ENCODE measurements at regions of chr3 and their contacts with region 1.

Region 1: GRCh38 chr3:45593708-45594609 is 592 bp upstream of the LIMD1 start:
- DNase-seq: peak; percentile 83
- ATAC-seq: peak; percentile 68
- H3K4me3 ChIP-seq: peak overlapping the region; percentile 89
- H3K27ac ChIP-seq: peak overlapping the region; percentile 80
- H3K4me1 ChIP-seq: peaks cover 38% of the 10 kb centered on the region
- H3K27me3 ChIP-seq: no peaks in the 10 kb centered on the region
- CTCF ChIP-seq: no peak

Region 2: DNA sequence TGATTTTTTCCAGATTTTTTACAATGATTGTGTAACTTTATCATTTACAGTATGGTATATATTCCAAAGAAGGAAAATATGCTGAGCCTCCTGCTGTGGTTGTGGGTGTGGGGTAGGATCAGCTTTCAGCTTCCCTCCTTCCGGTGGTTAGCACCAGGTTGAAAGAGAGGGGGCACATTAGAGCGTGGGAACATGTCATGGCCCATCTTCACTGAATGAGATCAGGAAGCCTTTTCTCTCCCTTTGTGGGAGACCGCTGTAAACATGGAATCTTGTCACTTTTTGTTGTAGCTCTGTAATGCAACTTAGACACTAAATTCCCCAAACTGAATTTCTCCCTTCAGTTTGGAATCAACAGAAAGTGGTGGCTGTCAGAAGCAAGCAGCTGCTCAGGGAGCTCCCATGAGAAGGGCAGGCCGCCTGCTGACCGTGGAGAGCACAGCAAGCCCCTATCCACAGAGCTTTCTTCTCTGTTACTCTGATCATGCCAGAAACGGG is 86.1 kb before region 1 on chr3:
- CTCF ChIA-PET with region 1: no interaction called
- POLR2A ChIA-PET with region 1: no interaction called
- intact Hi-C with region 1: loop called (anchors 1 kb)
- DNase-seq: no peak
- ATAC-seq: peak; percentile 19; the same call in 1 of the 2 replicates
- H3K4me3 ChIP-seq: no peak overlapping the region
- H3K27ac ChIP-seq: peak overlapping the region; percentile 86
- H3K4me1 ChIP-seq: peaks cover 23% of the 10 kb centered on the region
- H3K27me3 ChIP-seq: no peaks in the 10 kb centered on the region
- CTCF ChIP-seq: peak; percentile 26; the same call in 1 of the 2 replicates

Region 3: GRCh38 chr3:45518376-45519135 is 75.4 kb before region 1 on chr3:
- CTCF ChIA-PET with region 1: no interaction called
- POLR2A ChIA-PET with region 1: no interaction called
- intact Hi-C with region 1: no loop called
- DNase-seq: no peak
- ATAC-seq: no peak
- H3K4me3 ChIP-seq: no peak overlapping the region
- H3K27ac ChIP-seq: no peak overlapping the region
- H3K4me1 ChIP-seq: no peaks in the 10 kb centered on the region
- H3K27me3 ChIP-seq: no peaks in the 10 kb centered on the region
- CTCF ChIP-seq: no peak

Region 4: GRCh38 chr3:45546716-45547701 is 47.0 kb before region 1 on chr3:
- CTCF ChIA-PET with region 1: interaction called, 4 read pairs
- POLR2A ChIA-PET with region 1: interaction called, 4 read pairs
- intact Hi-C with region 1: loop called (anchors 2 kb)
- DNase-seq: peak; percentile 71
- ATAC-seq: peak; percentile 57
- H3K4me3 ChIP-seq: no peak overlapping the region
- H3K27ac ChIP-seq: peak overlapping the region; percentile 47
- H3K4me1 ChIP-seq: peaks cover 45% of the 10 kb centered on the region
- H3K27me3 ChIP-seq: no peaks in the 10 kb centered on the region
- CTCF ChIP-seq: peak; percentile 74

Region 5: GRCh38 chr3:45616158-45616557 is 22.2 kb after region 1 on chr3:
- CTCF ChIA-PET with region 1: no interaction called
- POLR2A ChIA-PET with region 1: no interaction called
- intact Hi-C with region 1: no loop called
- DNase-seq: no peak
- ATAC-seq: no peak
- H3K4me3 ChIP-seq: no peak overlapping the region
- H3K27ac ChIP-seq: no peak overlapping the region
- H3K4me1 ChIP-seq: peaks cover 27% of the 10 kb centered on the region
- H3K27me3 ChIP-seq: no peaks in the 10 kb centered on the region
- CTCF ChIP-seq: no peak

Region 6: GRCh38 chr3:45626096-45626887 is 32.3 kb after region 1 on chr3:
- CTCF ChIA-PET with region 1: no interaction called
- POLR2A ChIA-PET with region 1: no interaction called
- intact Hi-C with region 1: loop called (anchors 1 kb)
- DNase-seq: peak; percentile 96
- ATAC-seq: peak; percentile 79
- H3K4me3 ChIP-seq: peak overlapping the region; percentile 47
- H3K27ac ChIP-seq: peak overlapping the region; percentile 98
- H3K4me1 ChIP-seq: peaks cover 41% of the 10 kb centered on the region
- H3K27me3 ChIP-seq: no peaks in the 10 kb centered on the region
- CTCF ChIP-seq: no peak

Region 7: DNA sequence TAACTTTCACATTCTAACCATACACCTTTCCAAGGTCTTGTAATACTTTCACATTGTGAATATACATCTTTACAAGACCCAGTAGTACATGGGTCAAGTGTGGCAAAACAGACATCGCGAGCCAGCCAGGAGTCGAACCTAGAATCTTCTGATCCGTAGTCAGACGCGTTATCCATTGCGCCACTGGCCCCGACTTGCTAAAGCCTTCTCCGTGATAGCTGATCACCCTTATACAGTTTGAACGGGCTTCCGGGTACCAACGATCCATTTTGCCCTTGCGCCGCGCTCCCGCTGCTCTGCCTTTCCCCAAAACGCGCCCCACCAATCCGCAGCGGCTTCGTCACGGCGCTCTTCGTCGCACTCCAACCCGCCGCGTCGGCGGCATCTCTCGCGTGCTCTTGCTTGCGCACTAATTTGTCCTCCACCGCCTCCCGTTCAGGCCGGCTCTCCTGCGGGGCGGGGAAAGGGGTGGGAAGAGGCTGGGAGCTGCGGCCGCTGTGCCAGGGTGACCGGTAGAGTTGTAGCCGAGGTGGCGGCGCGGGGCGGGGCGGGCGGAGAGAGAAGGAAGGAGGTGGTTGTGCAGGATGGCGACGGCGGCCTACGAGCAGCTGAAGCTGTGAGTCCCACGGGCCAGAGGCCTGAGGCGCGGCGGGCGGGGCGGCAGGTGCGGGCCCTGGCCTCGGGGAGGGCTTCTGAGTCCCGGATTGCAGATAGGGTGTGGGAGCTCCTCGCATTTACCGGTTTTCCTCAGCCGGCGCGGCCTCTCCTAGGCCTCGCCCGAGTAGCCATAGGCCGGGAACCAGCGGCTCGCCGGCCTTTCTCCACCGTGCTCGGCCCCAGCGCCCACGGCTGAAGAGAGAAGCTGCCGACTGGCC is 95.2 kb after region 1 on chr3 and contains the start of gene SACM1L:
- CTCF ChIA-PET with region 1: no interaction called
- POLR2A ChIA-PET with region 1: no interaction called
- intact Hi-C with region 1: no loop called
- DNase-seq: peak; percentile 99
- ATAC-seq: peak; percentile 82
- H3K4me3 ChIP-seq: peak within 1 kb of the TSS; percentile 95
- H3K27ac ChIP-seq: peak within 1 kb of the TSS; percentile 68
- H3K4me1 ChIP-seq: peaks cover 11% of the 10 kb centered on the region
- H3K27me3 ChIP-seq: no peaks in the 10 kb centered on the region
- CTCF ChIP-seq: no peak
- total RNA-seq, gene SACM1L: 30.1 and 46.7 TPM in 2 replicates

Measured in PC-3 (cell line).